PC-9 (cell line): ENCODE measurements at regions of chr7 and their contacts with region 1.

Region 1: GRCh38 chr7:142338633-142339501 is 81.0 kb upstream of the PRSS58 start:
- DNase-seq: peak; percentile 61 to 88
- H3K4me3 ChIP-seq: no peak overlapping the region
- H3K27ac ChIP-seq: no peak overlapping the region
- H3K4me1 ChIP-seq: no peaks in the 10 kb centered on the region
- H3K27me3 ChIP-seq: no peaks in the 10 kb centered on the region
- CTCF ChIP-seq: peak; percentile 76

Region 2: DNA sequence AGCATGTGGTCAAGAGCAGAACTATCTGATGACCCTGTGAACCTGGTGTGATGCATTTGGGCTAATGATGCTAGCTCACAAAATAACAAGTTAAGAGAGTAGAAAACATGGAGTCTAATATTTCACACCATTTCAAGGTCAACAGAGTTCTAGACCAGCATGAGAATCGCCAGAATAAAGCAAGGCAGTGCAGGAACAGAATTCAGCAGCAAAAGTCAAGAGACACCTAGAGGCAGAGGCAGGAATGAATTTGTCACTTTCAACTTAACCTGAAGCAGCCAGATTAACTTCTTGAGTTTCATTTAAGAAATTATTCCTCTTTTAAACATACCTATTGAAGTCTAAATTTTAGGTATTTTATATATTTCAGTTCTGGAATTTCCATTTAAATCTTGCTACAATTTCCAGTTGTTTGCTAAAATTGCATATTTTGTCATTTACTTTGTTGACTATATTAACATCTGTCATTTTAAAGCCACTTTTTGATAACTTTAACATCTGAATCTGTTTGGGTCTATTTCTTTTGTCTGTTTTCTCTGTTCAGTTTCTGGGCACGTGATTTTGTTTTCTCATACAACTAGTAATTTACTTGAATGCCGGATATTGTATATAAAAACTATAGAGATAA is 36.8 kb before region 1 on chr7:
- CTCF ChIA-PET with region 1: no interaction called
- POLR2A ChIA-PET with region 1: no interaction called
- intact Hi-C with region 1: loop called (anchors 1 kb)
- DNase-seq: no peak
- H3K4me3 ChIP-seq: no peak overlapping the region
- H3K27ac ChIP-seq: no peak overlapping the region
- H3K4me1 ChIP-seq: no peaks in the 10 kb centered on the region
- H3K27me3 ChIP-seq: no peaks in the 10 kb centered on the region
- CTCF ChIP-seq: 0 out of 2 replicates have a peak, but pooled peaks have one; percentile 35

Region 3: GRCh38 chr7:142357953-142358520 is 19.2 kb after region 1 on chr7:
- CTCF ChIA-PET with region 1: interaction called, 6 read pairs
- POLR2A ChIA-PET with region 1: no interaction called
- intact Hi-C with region 1: loop called (anchors 1 kb)
- DNase-seq: peak; percentile 71 to 75
- H3K4me3 ChIP-seq: peak overlapping the region; percentile 27; the same call in 1 of the 2 replicates
- H3K27ac ChIP-seq: peak overlapping the region; percentile 0; the same call in 1 of the 2 replicates
- H3K4me1 ChIP-seq: peaks cover 28% of the 10 kb centered on the region
- H3K27me3 ChIP-seq: no peaks in the 10 kb centered on the region
- CTCF ChIP-seq: peak; percentile 98

Region 4: DNA sequence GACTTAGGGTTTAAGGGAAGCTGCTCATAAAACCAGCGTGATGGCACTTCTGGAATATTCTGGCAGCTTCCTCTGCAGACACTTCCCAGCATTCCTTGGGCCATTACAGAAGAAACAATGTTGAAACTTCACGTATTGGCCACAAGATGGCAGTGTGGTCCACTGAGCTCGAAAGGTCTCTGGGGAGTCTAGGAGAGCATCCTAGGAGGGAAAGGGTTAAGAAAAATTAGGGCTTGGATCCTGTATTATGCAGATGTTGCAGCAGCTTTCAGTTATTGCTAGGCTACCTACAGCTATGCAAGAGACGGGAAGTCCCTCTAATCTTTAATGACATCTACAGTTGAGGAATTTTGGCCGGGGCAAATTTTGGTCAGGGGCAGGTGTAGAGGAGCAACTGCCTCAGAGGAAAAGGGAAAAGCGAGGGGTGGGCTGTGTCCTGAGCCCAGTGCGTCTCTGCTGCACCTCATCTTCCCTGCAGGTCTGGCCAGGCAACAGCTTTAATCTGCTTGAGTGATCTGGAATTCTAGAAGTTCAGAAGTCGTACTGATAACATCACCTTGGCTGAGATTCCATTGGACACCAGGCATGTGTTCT is 139.7 kb after region 1 on chr7:
- CTCF ChIA-PET with region 1: interaction called, 3 read pairs
- POLR2A ChIA-PET with region 1: no interaction called
- intact Hi-C with region 1: loop called (anchors 5 kb)
- DNase-seq: peak; percentile 58 to 74
- H3K4me3 ChIP-seq: no peak overlapping the region
- H3K27ac ChIP-seq: no peak overlapping the region
- H3K4me1 ChIP-seq: peaks cover 16% of the 10 kb centered on the region
- H3K27me3 ChIP-seq: no peaks in the 10 kb centered on the region
- CTCF ChIP-seq: peak; percentile 91

Region 5: DNA sequence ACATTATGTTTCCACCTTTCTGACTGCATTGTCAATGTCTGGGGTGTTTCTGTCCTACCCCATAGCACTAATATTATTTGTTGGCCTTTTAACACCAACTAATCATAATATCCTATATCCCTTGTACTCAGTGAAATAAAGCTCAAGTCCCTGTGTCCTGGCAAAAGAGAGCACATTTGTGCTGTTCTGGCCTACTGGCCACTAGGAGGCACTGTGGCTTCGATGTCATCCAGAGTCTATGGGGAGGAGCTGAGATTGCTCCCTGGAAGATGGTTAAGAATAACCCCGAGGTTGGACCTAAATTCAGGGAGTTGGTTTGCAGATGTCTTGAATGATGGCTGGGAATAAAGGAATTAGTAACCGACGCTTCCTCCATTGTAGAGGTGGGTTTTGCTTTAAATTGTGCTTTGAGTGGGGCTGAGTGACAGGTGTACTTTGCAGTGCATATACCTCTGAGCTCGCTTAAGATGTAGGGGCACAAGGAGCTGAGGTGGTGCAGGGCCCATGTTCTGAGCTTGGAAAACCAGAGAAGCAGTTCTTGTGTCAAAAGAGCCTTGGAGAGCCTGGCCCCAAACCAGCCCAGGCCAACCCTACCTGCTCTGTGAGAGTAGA is 219.2 kb after region 1 on chr7:
- CTCF ChIA-PET with region 1: no interaction called
- POLR2A ChIA-PET with region 1: no interaction called
- intact Hi-C with region 1: no loop called
- DNase-seq: peak in 1 of 2 experiments; percentile 14
- H3K4me3 ChIP-seq: no peak overlapping the region
- H3K27ac ChIP-seq: peak overlapping the region; percentile 78
- H3K4me1 ChIP-seq: peaks cover 55% of the 10 kb centered on the region
- H3K27me3 ChIP-seq: no peaks in the 10 kb centered on the region
- CTCF ChIP-seq: peak; percentile 74

Region 6: DNA sequence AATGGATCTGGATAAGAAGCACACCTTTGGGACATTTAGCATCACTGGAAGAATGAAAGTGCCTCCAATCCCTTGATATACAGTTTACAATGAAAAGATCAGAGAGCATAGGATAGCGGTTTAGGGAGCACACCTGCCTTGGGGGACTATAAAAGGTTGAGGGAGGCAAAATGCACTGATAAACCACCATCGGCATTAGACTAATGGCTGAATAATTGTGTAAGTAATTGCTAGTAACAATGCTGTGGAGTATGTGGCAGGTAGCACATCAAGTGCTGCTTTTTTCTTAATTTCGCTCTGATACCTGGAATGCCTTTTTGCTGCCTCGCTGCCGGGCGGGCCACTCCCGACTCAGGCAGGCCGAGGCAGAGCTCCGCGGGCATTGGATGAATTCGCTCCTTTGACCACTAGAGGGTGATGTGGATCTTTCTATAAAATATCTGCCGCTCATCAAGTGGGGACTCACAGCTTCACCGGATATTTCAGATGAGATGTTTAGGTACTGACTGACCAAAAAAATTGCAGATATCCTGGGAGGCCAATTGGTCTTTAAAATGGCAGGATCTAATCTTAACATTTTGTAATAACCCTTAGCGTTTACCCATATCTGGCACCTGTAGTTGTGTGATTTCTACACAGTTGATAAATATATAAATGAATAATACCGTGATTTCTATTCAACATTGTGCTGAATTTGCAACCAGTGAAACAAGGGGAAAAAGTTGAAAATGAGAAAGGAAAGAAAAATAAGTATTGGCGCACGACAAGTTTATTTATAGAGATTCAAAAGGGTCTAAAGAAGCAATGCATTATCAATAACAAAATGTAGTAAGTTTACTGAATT is 293.6 kb after region 1 on chr7:
- CTCF ChIA-PET with region 1: interaction called, 6 read pairs
- POLR2A ChIA-PET with region 1: no interaction called
- intact Hi-C with region 1: loop called (anchors 2 kb)
- DNase-seq: peak; percentile 70 to 72
- H3K4me3 ChIP-seq: no peak overlapping the region
- H3K27ac ChIP-seq: no peak overlapping the region
- H3K4me1 ChIP-seq: no peaks in the 10 kb centered on the region
- H3K27me3 ChIP-seq: no peaks in the 10 kb centered on the region
- CTCF ChIP-seq: peak; percentile 93